ENCODE measurements at regions of chr22 and their contacts with region 1.

Region 1: DNA sequence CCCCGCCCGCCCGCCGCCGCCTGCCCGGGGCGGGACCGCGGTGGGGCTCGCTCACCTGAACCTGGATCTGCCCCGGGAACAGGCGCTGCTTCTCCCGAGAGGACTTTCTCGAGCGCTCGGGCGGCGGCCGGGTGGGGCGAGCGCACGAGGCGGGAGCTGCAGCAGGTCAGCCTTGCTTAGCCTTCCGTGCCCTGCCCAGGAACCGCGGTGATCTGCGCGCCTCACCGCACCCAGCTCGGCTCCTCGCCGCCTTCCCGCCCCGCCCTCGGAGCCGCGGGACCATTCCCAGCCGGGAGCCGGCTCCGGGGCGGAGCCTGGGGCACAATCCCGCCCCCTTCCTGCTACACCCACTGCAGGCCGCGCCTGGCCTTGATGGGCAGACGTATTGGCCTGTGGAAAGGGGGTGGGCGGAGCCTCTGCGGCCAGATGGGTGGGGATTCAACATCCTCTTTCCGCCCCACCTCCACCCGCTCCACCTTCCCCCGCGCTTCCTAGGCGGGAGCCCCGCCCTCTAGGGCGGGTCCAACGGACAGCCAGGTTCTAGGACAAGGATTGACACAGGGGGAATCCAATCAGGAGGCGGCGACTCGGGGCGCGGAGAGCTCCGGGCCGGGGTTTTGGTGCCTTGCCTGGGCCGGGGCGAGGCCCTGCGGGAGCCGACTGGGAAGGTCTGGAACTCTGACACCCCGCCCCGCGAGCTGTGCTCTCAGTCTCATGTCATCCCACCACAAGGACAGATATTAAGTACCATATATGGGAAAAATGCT is at the start of gene MYH9:
- DNase-seq: peak; percentile 100
- ATAC-seq: peak; percentile 93
- total RNA-seq, gene MYH9: 138 TPM

Region 2: DNA sequence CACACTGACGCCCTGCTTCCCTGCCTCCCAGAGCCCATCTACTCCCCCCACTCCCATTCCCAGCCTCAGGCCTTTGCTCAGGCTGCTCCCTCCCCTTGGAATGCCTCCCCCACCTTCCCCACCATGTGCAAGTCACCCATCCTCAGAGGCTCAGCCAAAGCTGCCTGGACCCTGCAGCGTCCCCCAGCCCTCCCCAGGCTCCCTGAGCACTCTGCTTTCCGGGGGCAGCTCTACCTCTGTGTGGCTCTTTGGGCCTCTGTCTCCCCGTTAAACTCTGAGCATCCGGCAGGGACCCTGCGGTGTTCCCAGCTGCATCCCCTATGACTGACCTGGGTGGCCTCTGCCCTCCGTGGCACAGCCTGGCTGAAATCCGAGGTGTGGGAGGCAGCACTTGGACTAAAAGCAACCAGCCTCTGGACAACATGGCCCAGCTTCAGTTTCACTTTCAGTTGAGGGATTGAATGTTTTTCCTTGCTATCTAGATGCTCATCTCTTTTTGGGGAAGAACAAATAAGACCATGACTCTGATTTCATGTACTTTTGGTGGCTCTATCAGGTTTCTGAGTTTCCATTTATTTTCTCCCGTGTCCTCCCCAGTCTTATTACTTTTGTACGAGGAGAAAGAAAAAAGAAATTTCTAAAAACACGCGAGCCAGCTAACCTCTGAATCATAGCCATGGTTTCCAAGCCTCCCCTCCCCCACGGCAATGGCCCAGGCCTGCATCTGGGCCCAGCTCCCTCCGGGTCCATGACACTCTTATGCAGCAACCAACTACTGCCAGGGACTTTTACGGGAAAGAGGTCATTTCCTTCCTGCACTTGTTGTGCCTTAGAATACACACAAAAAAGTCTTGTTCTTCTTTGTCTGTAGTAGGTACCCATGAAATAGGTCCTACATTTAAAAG is 231.2 kb before region 1 on chr22:
- intact Hi-C with region 1: no loop called
- DNase-seq: peak; percentile 90
- ATAC-seq: peak; percentile 77

Region 3: DNA sequence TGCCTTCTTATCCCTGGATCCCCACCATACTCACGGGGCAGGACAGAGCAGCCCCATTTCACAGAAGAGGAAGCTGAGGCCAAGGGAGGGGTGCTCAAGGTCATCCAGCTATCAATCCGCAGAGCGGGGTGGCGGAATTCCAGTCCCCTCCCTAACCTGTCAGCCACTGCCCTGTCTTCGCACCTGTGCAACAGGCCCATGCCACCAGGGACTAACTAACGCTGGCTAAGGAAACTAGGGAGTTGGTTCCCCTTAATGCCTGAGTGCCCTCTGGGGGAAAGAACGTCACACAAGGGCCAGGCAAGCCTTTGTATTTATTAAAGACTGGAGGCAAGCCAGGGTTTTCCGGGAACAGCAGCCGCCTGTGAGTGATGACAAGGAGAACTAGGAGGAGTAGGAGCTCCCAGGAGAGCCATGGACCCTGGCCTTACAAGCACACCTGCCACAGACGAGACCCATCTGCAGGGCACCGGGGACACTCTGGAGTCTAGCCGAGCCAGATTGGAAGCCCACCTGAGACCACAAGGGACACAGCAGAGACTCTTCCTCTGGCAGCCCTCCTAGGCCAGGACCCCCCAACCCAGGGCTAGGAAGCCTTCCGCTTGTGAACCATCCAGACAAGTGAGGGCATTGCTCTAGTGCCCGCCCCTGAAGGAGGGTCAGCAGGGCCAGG is 64.6 kb before region 1 on chr22:
- intact Hi-C with region 1: loop called (anchors 5 kb)
- DNase-seq: peak; percentile 82
- ATAC-seq: peak; percentile 67

Region 4: DNA sequence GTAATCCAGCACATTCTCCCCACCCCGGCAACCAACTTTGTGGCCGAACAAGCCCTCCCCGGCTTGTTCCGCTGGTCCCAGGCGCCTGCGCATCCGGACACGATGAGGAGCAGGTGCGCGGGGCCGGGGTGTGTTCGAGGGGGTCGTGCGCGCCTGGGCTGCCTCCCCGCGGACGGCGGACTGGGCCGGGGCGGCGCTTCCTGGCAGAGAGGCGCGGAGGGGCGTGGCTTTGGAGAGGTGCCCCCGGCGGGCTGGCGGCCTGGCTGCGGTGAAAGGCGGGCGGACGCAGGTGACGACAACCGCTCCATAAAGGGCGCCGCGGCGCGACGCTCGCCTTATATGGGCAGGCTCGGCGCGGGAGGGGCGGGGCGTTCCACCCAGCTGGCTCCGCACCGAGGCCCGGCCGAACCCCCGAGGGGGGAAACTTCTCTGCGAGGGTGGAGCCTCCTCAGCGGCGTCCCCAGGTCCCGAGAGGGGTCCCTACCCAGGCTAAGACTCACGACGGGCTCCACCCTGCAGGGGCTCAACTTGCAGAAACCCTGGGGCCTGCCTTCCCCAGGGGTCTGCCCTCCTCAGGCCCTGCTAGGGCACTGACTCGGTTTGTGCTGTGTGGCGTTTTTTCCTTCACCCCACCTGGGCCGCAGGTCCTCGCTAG is 67.1 kb after region 1 on chr22:
- intact Hi-C with region 1: loop called (anchors 5 kb)
- DNase-seq: peak; percentile 97
- ATAC-seq: peak; percentile 92

Region 5: DNA sequence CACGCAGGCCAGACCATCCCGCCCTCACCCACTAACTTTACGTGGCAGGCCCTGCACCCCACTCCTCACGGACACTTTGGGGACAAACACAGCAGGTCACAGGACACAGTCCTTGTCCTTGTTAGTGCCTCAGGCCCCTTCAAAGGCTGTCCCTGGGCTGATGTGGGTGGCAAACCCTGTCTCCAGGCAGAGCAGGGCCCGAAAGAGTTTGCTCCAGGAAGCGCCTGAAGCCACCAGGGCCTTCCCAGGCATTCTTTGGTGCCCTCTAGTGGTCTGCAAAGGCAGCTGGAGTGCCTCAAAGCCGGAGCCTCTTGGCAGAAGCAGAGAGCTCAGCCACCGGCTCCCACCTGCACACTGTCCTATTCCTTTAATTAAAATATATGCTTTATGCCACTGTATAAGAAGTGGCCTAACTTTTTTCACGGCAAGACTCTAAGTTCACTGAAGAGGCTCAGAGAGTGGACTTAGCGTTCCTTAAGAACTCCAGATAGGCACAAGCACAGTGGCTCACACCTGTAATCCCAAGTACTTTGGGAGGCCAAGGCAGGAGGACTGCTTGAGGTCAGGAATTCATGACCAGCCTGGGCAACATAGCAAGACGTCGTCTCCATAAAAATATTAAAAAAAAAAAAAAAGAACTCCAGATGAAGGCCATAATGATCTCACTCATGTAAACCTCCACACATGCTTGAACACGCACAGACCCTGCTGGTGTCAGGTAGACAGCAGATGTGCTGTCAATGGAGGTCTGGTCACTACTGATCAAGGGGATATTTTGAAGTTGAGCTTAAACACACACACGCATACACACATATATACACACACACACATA is 82.4 kb after region 1 on chr22:
- intact Hi-C with region 1: loop called (anchors 5 kb)
- DNase-seq: peak; percentile 87
- ATAC-seq: peak; percentile 80